Heart left ventricle (tissue), 16 donors: ENCODE measurements at regions of chr20 and their contacts with region 1.

Region 1: GRCh38 chr20:57266291-57267157 is at the start of gene BMP7:
- DNase-seq: no peak
- ATAC-seq: peak in 1 of 4 donors; percentile 36
- H3K4me3 ChIP-seq: peak within 1 kb of the TSS in 10 of 12 donors; percentile 15 to 52 (median 24)
- H3K27ac ChIP-seq: peak within 1 kb of the TSS in 1 of 12 donors; percentile 27
- H3K4me1 ChIP-seq: peaks cover 0 to 25% (median 0%) of the 10 kb centered on the region in 12 donors
- H3K27me3 ChIP-seq: peaks cover 25 to 87% (median 41%) of the 10 kb centered on the region in 9 donors
- CTCF ChIP-seq: no peak
- POLR2A ChIP-seq: no peak
- total RNA-seq, gene BMP7: 0.72 to 12.3 (median 3.7) TPM

Region 2: GRCh38 chr20:57124800-57125399 is 141.6 kb before region 1 on chr20:
- intact Hi-C with region 1: no loop called
- DNase-seq: no peak
- ATAC-seq: no peak
- H3K4me3 ChIP-seq: no peak overlapping the region
- H3K27ac ChIP-seq: no peak overlapping the region
- H3K4me1 ChIP-seq: peaks cover 0 to 7% (median 0%) of the 10 kb centered on the region in 12 donors
- H3K27me3 ChIP-seq: peaks cover 0 to 6% (median 0%) of the 10 kb centered on the region in 9 donors
- CTCF ChIP-seq: no peak
- POLR2A ChIP-seq: no peak

Region 3: DNA sequence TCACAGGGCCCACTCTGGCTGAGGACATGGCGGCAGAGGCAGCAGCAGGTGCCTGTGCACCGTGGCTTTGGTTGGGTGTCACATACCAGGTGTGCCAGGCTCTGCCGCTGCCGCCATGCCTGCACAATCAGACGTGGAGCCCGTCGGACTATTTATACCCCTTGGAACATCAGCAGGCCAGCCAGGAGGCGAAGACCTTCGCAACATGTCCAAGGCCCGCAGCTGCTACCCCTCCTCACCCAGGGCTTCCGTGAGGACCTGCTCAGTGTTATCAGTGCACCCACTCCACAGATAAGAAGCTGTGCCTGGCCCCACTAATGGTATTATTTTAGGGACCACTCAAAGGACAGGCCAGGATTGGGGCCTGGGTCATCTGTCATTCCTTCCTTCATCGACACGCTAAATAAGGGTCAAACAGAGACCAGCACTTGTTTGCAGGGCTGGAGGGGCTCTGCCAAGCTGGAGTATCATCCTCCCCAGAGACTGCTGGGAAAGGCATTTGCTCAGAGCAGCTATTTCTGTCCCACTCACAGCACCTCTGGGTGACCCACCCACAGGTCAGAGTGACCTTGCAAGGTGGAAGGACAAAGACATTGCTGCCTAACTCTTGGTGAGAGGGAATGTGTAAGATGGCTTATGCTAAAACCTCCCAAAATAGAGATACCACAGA is 109.3 kb before region 1 on chr20:
- intact Hi-C with region 1: loop called in 1 of 10 experiments (anchors 5 kb)
- DNase-seq: peak in 4 of 5 donors; percentile 31 to 88 (median 65)
- ATAC-seq: peak; percentile 66 to 91 (median 88)
- H3K4me3 ChIP-seq: no peak overlapping the region
- H3K27ac ChIP-seq: peak overlapping the region; percentile 37 to 84 (median 68)
- H3K4me1 ChIP-seq: peaks cover 0 to 16% (median 0%) of the 10 kb centered on the region in 12 donors
- H3K27me3 ChIP-seq: no peaks in the 10 kb centered on the region
- CTCF ChIP-seq: no peak
- POLR2A ChIP-seq: no peak

Region 4: DNA sequence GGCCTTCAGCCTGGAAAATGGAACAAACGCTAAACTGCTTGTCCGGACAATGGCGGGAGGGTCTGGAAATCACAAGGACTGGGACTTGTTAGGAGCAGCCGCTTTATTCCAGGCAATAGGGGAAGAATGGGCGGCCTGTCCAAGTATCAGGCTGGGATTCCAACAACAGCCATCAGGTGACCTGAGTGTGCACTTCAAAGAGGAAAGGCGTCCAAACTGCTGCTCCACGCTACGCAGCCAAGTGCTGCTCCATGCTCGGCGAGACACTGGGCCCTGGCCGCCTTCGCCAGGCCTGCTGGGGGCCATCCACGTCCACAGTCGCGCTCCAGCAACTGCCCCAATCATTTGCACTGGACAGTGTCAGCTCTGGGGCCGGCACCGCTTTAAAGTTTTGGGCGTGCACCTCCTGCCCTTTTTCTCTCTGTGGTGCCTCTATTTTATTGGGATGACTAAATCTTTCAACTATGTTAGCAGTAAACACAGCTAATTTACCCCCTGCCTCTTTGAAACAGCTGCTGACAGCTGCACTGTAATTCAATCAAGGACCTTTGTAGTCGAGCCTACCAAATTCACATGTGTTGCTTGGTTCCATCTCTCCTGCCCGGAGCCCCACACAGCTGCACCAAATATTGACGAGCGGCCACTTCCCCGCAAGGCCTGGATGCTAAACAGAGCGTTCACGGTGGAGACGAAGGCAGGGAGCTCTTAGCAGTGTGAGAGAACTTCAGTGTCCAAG is 98.4 kb before region 1 on chr20:
- intact Hi-C with region 1: loop called in 1 of 10 experiments (anchors 5 kb)
- DNase-seq: peak in 2 of 5 donors; percentile 25 to 58
- ATAC-seq: peak; percentile 71 to 90 (median 75)
- H3K4me3 ChIP-seq: no peak overlapping the region
- H3K27ac ChIP-seq: peak overlapping the region; percentile 29 to 85 (median 60)
- H3K4me1 ChIP-seq: peaks cover 0 to 14% (median 0%) of the 10 kb centered on the region in 12 donors
- H3K27me3 ChIP-seq: no peaks in the 10 kb centered on the region
- CTCF ChIP-seq: no peak
- POLR2A ChIP-seq: no peak

Region 5: GRCh38 chr20:57231951-57232428 is 34.5 kb before region 1 on chr20:
- intact Hi-C with region 1: no loop called
- DNase-seq: no peak
- ATAC-seq: no peak
- H3K4me3 ChIP-seq: no peak overlapping the region
- H3K27ac ChIP-seq: no peak overlapping the region
- H3K4me1 ChIP-seq: no peaks in the 10 kb centered on the region
- H3K27me3 ChIP-seq: peaks cover 0 to 15% (median 3%) of the 10 kb centered on the region in 9 donors
- CTCF ChIP-seq: no peak
- POLR2A ChIP-seq: no peak